Activated naive CD4-positive, alpha-beta T cell treated with anti-CD3 and anti-CD28 coated beads for 36 hours (primary cell): ENCODE measurements at regions of chr9 and their contacts with region 1.

Region 1: DNA sequence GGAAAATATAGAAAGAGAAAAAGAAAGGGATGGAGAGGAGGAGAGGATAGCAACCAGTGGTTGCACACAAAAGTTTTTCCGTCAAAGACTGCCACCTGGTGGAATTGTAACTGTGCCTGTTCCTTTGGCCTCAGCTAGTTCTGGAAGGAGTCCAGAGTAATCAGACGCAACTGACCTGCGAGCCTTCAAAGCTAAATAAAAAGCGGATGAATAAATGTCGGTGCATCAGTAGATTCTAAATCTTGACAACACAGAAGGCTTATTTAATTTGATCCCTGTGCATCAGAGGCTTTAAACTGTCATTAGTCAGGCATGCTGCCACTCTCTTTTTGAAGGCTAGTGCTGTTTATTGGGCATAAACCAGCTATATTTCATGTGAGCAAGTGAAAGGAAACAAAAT is 132.9 kb upstream of the ACO1 start:
- DNase-seq: peak; percentile 67
- H3K4me3 Mint-ChIP-seq: no peak overlapping the region
- H3K27ac Mint-ChIP-seq: no peak overlapping the region
- H3K4me1 Mint-ChIP-seq: no peaks in the 10 kb centered on the region
- H3K27me3 Mint-ChIP-seq: peaks cover 8% of the 10 kb centered on the region

Region 2: GRCh38 chr9:31119882-31120454 is 1131.6 kb before region 1 on chr9:
- CTCF ChIA-PET with region 1: no interaction called
- intact Hi-C with region 1: loop called (anchors 1 kb)
- DNase-seq: peak; percentile 52
- H3K4me3 Mint-ChIP-seq: no peak overlapping the region
- H3K27ac Mint-ChIP-seq: no peak overlapping the region
- H3K4me1 Mint-ChIP-seq: peaks cover 5% of the 10 kb centered on the region
- H3K27me3 Mint-ChIP-seq: no peaks in the 10 kb centered on the region

Region 3: DNA sequence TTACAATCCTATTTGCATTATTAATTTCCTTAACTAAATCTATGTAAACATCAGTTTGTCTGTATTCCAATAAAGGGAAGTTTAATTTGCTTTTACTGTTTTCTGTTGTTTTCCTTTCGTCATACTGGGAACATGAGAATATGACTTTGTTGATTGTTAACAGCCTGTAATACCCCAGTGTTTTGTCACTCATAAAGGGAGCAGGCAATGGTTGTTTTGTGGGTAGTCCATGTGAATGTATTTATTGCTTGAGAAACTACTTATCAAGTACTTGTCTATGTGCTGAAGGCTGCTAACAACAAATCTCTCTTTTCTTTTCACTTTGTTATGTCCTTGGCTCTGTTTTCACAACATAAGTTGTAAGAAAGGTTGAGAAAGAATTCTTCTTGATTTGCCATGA is 937.3 kb before region 1 on chr9:
- CTCF ChIA-PET with region 1: no interaction called
- intact Hi-C with region 1: loop called (anchors 10 kb)
- DNase-seq: no peak
- H3K4me3 Mint-ChIP-seq: no peak overlapping the region
- H3K27ac Mint-ChIP-seq: no peak overlapping the region
- H3K4me1 Mint-ChIP-seq: peaks cover 5% of the 10 kb centered on the region
- H3K27me3 Mint-ChIP-seq: no peaks in the 10 kb centered on the region

Region 4: GRCh38 chr9:31730398-31730797 is 521.1 kb before region 1 on chr9:
- CTCF ChIA-PET with region 1: no interaction called
- intact Hi-C with region 1: no loop called
- DNase-seq: no peak
- H3K4me3 Mint-ChIP-seq: no peak overlapping the region
- H3K27ac Mint-ChIP-seq: no peak overlapping the region
- H3K4me1 Mint-ChIP-seq: no peaks in the 10 kb centered on the region
- H3K27me3 Mint-ChIP-seq: no peaks in the 10 kb centered on the region

Region 5: DNA sequence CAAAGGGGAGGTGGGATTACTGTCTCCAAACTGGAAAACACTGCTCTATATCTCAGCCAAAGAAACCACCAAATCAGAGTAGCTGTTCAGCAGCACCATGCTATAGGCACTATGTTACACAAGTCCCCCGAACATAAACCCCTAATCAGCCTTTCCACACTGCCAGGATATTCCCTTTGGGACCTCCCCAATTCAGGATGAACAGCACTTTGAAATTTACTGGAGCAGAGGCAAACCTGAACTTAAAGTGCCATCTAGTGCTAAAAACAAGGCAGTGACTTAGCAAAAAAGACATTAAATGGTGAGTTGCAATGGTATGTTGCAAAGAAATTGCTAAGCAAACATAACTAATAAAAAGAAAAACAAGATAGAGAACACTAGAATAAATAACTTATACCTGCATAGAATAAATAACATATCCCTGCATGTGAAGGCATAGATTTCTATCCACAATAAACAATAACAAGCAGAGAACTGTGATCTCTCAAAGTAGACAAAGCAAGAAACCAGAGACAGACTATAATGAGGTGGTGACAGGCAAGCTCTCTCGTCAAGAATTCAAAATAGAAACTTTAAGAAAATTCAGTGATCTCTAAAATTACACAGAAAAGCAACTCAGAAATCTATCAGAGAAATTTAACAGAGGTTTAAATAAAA is 451.5 kb before region 1 on chr9:
- CTCF ChIA-PET with region 1: no interaction called
- intact Hi-C with region 1: loop called (anchors 10 kb)
- DNase-seq: no peak
- H3K4me3 Mint-ChIP-seq: no peak overlapping the region
- H3K27ac Mint-ChIP-seq: no peak overlapping the region
- H3K4me1 Mint-ChIP-seq: peaks cover 10% of the 10 kb centered on the region
- H3K27me3 Mint-ChIP-seq: peaks cover 2% of the 10 kb centered on the region

Region 6: DNA sequence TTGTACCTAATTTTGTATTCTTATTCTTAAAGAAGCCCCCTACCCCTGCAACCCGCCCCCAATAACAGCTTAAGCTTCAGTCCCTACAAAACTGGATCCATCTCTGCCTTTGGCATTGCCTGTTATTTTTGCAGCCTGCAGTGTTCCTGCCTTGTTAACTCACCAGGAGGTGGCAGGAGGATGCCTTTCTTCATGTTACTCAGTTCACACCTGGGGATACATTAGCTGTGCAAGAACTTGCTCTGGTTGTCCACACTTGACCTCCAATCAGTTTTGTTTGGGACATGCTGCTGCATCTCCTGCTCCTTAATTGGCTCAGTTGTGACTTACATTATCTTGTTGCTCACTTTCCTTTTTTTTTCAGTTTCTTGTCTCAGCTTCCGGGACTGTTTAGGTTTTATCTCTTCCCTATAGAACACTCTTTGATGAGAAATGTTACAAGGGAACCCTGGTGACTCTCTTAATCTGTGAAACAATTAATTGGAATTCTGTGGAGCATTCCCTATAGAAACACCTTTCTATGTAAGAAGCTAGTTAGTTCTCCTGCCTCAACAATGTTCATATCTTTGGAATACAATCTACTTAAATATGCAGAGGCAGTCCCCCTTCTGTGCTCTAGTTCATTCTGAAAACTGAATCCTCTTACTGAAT is 334.8 kb before region 1 on chr9:
- CTCF ChIA-PET with region 1: no interaction called
- intact Hi-C with region 1: loop called (anchors 2 kb)
- DNase-seq: no peak
- H3K4me3 Mint-ChIP-seq: no peak overlapping the region
- H3K27ac Mint-ChIP-seq: no peak overlapping the region
- H3K4me1 Mint-ChIP-seq: no peaks in the 10 kb centered on the region
- H3K27me3 Mint-ChIP-seq: peaks cover 6% of the 10 kb centered on the region

Region 7: GRCh38 chr9:32426278-32426939 is 174.9 kb after region 1 on chr9:
- CTCF ChIA-PET with region 1: no interaction called
- intact Hi-C with region 1: no loop called
- DNase-seq: no peak
- H3K4me3 Mint-ChIP-seq: no peak overlapping the region
- H3K27ac Mint-ChIP-seq: no peak overlapping the region
- H3K4me1 Mint-ChIP-seq: peaks cover 3% of the 10 kb centered on the region
- H3K27me3 Mint-ChIP-seq: no peaks in the 10 kb centered on the region